ENCODE measurements at regions of chr11 and their contacts with region 1.

Region 1: DNA sequence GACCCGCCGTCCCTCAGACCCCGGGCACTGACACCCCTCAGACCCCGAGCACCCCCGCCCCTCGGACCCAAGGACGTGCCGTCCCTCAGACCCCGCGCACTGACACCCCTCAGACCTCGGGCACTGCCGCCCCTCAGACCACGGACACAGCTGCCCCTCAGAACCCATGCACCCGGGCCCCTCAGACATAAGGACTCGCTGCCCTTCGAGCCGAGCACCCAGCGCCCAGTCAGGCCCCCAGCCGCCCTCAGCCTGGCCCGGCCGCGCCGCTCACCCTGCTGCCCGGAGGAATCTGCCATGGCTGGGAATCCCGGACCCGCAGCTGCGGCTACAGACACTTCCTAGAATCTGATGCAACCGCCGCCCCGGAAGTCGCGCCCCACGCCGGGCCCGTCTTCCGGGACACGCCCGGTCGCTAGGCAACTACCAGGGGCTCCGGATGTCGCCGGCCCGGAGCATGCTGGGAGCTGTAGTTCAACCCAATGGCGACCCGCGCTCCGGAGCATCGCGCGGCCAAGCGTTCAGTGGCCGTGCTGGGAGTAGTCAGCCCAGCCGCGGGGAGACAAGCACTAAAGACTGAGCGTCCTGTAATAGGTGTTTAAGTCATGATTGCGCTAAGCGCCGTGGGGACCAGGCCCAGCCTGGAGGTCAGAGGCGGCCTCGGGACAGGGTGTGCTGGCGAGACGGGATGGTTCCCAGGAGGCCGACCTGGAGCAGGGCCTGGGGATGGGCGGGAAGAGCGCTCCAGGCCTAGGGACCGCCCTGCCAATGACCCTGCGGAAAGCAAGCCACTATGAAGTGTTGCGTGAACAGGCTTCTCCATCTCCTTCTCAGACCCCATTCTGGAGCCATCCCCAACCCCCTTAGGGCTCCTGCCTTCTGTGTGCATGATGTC is at the start of gene CARS1:
- DNase-seq: peak; percentile 93
- H3K4me3 Mint-ChIP-seq: peak within 1 kb of the TSS; percentile 90
- H3K27ac Mint-ChIP-seq: peak within 1 kb of the TSS; percentile 83
- H3K4me1 Mint-ChIP-seq: peaks cover 35% of the 10 kb centered on the region
- H3K27me3 Mint-ChIP-seq: peaks cover 3% of the 10 kb centered on the region
- total RNA-seq, gene CARS1: 60.5 and 63.6 TPM in 2 replicates

Region 2: GRCh38 chr11:2901854-2902783 is 155.2 kb before region 1 on chr11:
- intact Hi-C with region 1: loop called (anchors 5 kb)
- DNase-seq: peak; percentile 93
- H3K4me3 Mint-ChIP-seq: peak overlapping the region; percentile 72
- H3K27ac Mint-ChIP-seq: no peak overlapping the region
- H3K4me1 Mint-ChIP-seq: peaks cover 41% of the 10 kb centered on the region
- H3K27me3 Mint-ChIP-seq: no peaks in the 10 kb centered on the region

Region 3: GRCh38 chr11:2930704-2931428 is 126.5 kb before region 1 on chr11:
- intact Hi-C with region 1: loop called (anchors 1 kb)
- DNase-seq: no peak
- H3K4me3 Mint-ChIP-seq: peak overlapping the region; percentile 78
- H3K27ac Mint-ChIP-seq: peak overlapping the region; percentile 77
- H3K4me1 Mint-ChIP-seq: peaks cover 15% of the 10 kb centered on the region
- H3K27me3 Mint-ChIP-seq: peaks cover 12% of the 10 kb centered on the region

Region 4: GRCh38 chr11:3014057-3014938 is 43.0 kb before region 1 on chr11:
- intact Hi-C with region 1: loop called (anchors 1 kb)
- DNase-seq: peak; percentile 72
- H3K4me3 Mint-ChIP-seq: peak overlapping the region; percentile 63
- H3K27ac Mint-ChIP-seq: peak overlapping the region; percentile 90
- H3K4me1 Mint-ChIP-seq: peaks cover 41% of the 10 kb centered on the region
- H3K27me3 Mint-ChIP-seq: no peaks in the 10 kb centered on the region

Region 5: GRCh38 chr11:3378426-3379423 is 321.4 kb after region 1 on chr11 and contains the start of gene ZNF195:
- intact Hi-C with region 1: loop called (anchors 2 kb)
- DNase-seq: peak; percentile 98
- H3K4me3 Mint-ChIP-seq: peak within 1 kb of the TSS; percentile 96
- H3K27ac Mint-ChIP-seq: peak within 1 kb of the TSS; percentile 94
- H3K4me1 Mint-ChIP-seq: peaks cover 30% of the 10 kb centered on the region
- H3K27me3 Mint-ChIP-seq: no peaks in the 10 kb centered on the region
- total RNA-seq, gene ZNF195: 41.2 and 42.8 TPM in 2 replicates

Region 6: DNA sequence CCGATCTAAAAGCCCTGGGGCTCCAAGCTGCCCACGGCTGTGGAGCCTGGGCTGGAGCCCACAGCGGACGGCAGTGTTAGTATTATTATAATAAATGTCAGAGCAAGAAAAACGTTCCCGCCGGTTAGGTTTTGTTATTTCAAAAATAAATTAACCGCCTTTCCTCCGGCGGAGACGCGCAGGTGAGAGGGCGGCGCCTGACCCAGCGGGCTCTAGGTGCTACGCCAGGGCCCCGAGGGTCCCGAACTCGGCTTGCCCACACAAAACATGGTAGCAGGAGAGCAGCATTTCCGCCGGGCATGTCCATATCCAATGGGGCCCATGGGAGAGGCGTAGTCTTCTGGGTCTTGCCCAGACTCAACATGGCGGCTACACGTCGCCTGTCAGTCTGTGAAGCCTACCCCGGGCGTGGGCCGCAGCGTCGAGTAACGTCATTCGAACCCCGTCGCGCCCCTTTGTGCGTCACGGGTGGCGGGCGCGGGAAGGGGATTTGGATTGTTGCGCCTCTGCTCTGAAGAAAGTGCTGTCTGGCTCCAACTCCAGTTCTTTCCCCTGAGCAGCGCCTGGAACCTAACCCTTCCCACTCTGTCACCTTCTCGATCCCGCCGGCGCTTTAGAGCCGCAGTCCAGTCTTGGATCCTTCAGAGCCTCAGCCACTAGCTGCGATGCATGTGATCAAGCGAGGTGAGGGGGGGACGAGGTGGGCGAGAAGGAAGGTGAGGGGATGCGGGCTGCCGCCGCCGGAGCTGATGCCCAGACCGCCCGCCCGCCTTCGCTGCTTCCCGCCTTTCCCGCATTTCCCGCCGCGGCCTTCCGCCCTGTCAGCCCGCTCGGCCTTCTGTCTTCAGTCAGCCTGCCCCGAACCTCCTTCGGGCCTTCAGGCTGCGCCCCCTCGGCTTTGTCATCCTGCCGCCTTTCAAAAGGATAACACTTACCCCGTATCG is 1037.3 kb after region 1 on chr11 and contains the start of gene RRM1:
- intact Hi-C with region 1: loop called (anchors 5 kb)
- DNase-seq: peak; percentile 93
- H3K4me3 Mint-ChIP-seq: peak within 1 kb of the TSS; percentile 96
- H3K27ac Mint-ChIP-seq: peak within 1 kb of the TSS; percentile 97
- H3K4me1 Mint-ChIP-seq: peaks cover 76% of the 10 kb centered on the region
- H3K27me3 Mint-ChIP-seq: no peaks in the 10 kb centered on the region
- total RNA-seq, gene RRM1: 155 and 173 TPM in 2 replicates

Region 7: DNA sequence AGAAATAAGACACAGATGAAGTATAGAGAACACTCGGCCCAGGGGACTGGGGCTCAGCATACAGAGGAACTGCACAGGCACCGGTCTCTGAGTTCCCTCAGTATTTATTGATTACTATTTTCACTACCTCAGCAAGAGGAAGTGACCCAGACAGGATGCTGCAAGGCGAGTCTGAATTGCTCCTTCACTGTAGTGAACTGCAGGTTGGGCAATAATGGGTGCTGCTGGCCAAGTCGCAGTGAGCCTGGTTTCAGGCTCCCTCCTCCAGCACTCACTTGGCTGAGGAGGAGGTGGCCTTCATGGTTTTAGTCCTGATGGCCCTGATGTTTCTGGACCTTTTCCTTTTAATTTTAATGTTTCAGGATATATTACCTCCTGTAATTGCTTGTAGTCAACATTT is 1402.2 kb after region 1 on chr11:
- intact Hi-C with region 1: no loop called
- DNase-seq: no peak
- H3K4me3 Mint-ChIP-seq: no peak overlapping the region
- H3K27ac Mint-ChIP-seq: no peak overlapping the region
- H3K4me1 Mint-ChIP-seq: peaks cover 7% of the 10 kb centered on the region
- H3K27me3 Mint-ChIP-seq: peaks cover 3% of the 10 kb centered on the region

Measured in activated T-helper 1 cell treated with anti-CD3 and anti-CD28 coated beads, Interleukin-12 subunit alpha, Interleukin-12 subunit beta, Interleukin-2, Interleukin-4 antibody, amounts not matched to agents 30 ng/mL and 10 ng/mL and 1 ng/mL, durations not matched to agents 14 hours and 24 hours and 36 hours (primary cell).